AG04449 (cell line): ENCODE measurements at regions of chr9 and their contacts with region 1.

Region 1: DNA sequence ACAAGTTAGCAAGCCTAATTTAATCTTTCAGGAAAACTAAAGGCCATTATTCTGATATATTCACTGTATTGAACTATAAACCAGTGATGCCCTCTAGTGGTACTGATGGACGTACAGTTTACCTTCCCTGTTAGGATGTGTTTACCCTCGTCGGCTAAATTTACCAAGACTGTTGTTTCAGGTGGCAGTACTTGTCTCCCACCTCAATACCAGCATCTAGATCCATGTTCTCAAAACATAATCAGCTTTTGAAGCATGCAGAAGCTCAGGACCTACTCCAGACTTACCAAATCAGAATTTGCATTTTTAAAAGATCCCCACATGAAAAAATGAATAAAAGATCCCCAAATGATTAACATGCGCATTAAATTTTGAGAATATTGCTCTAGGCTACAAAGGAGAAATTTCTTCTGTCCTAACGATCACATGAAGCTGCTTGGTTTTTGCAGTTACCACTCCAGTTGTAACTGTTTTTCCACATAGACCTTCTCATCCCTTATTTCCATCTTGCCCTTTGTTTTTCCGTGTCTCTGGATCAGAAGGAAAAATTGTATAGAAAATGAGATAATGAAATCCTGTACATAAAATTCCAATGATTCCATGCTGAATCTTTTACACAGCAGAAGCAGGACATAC is 3.2 kb upstream of the BAAT start:
- DNase-seq: no peak
- H3K4me3 ChIP-seq: no peak overlapping the region
- CTCF ChIP-seq: peak; percentile 65

Region 2: DNA sequence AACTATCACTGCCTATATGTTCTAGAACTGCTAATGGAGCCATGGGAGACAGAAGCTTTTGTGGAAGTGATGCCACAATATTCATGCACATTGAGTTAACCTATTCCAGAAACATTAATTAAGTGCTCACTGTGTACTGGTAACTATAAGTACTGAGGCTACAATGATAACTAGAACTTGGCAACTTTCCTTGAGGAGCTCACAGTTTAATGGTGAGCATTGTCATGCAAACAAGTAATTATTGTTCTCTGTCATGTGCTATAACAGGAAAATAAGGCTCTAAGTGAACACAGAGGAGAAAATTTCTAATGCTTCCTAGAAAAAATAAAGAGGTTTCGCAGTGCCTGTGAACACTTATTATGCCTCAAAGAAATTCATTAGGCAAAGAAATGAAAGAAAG is 145.3 kb before region 1 on chr9:
- CTCF ChIA-PET with region 1: no interaction called
- POLR2A ChIA-PET with region 1: no interaction called
- DNase-seq: no peak
- H3K4me3 ChIP-seq: no peak overlapping the region
- CTCF ChIP-seq: no peak

Region 3: GRCh38 chr9:101376111-101376848 is 11.7 kb before region 1 on chr9:
- CTCF ChIA-PET with region 1: interaction called, 77 read pairs
- POLR2A ChIA-PET with region 1: no interaction called
- DNase-seq: peak; percentile 58
- H3K4me3 ChIP-seq: no peak overlapping the region
- CTCF ChIP-seq: no peak

Region 4: GRCh38 chr9:101398068-101398929 is 10.3 kb after region 1 on chr9 and contains the starts of genes MRPL50 and ZNF189:
- CTCF ChIA-PET with region 1: interaction called, 28 read pairs
- POLR2A ChIA-PET with region 1: interaction called, 3 read pairs
- DNase-seq: peak; percentile 95
- H3K4me3 ChIP-seq: peak within 1 kb of the TSS; percentile 82
- CTCF ChIP-seq: no peak

Region 5: DNA sequence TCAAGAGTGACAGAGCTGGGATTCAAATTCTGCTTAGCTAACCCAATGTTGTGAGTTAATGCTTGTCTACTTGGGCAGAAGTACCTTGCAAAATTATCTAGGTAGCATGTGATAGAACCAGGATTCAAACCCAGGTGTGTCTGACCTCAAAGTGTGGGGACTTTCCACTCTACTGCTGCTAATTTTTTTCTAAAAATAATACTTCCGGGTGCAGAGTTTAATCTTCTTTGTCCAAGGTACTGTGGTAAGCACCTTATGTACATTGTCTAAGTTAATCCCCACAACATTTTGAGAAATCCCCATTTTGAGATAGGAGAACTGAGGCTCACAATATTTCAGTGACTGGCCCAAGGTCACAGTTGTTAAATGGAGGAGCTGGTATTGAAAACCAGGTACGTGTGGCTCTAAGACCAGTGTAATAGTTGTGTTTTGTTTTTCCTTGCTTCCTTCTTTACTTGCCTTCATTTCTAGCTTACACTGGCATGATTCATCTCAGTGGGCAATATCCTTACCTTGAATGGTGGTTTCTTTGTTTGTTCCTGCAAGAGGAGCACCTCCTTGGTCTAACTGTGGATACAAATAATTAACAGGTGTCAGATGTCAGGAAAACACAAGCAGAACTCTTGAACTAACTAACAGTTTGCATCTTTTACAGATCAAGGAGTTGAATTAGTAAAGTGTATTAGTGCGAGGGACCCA is 40.1 kb after region 1 on chr9:
- CTCF ChIA-PET with region 1: no interaction called
- POLR2A ChIA-PET with region 1: no interaction called
- DNase-seq: no peak
- H3K4me3 ChIP-seq: no peak overlapping the region
- CTCF ChIP-seq: no peak

Region 6: GRCh38 chr9:101635473-101635872 is 247.5 kb after region 1 on chr9:
- CTCF ChIA-PET with region 1: no interaction called
- POLR2A ChIA-PET with region 1: no interaction called
- DNase-seq: no peak
- H3K4me3 ChIP-seq: no peak overlapping the region
- CTCF ChIP-seq: no peak

Region 7: GRCh38 chr9:101727612-101728524 is 339.9 kb after region 1 on chr9:
- CTCF ChIA-PET with region 1: no interaction called
- POLR2A ChIA-PET with region 1: no interaction called
- DNase-seq: peak; percentile 7
- H3K4me3 ChIP-seq: no peak overlapping the region
- CTCF ChIP-seq: peak; percentile 57